K562 (cell line): ENCODE measurements at regions of chr1 and their contacts with region 1.

Region 1: DNA sequence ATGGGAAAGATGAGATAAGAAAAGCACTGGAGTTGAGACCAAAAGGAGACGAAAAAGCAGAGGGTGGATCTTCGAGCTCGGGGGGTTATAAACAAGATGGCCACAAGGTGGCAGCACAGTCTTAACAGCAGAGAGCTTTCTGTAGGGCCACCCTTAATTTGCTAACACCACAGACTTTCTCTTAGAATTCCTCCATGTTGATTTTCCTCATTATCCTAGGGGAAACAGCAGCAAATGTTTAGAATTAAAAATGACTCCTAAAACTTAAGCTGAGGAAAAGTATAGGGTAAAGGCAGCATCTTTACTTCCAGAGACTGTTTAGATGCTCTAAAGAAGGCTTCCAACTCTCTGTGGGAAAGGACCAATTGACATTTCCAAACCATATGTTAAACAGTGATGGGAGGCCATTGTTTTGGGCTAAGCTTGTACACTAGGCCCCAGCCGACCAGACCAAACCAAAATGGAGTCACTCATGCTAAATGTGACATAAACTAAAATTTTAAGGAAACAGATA is 2.5 kb upstream of the APOBEC4 start:
- DNase-seq: peak; percentile 78 to 85 (median 83)
- ATAC-seq: peak; percentile 99
- H3K4me3 ChIP-seq: no peak overlapping the region
- H3K27ac ChIP-seq: no peak overlapping the region
- H3K4me1 ChIP-seq: no peaks in the 10 kb centered on the region
- H3K27me3 ChIP-seq: peaks cover 0 to 14% of the 10 kb centered on the region in 2 experiments; a peak in 1 of 5 replicates
- CTCF ChIP-seq: peak; percentile 82 to 95 (median 88)
- EP300 ChIP-seq: no peak
- POLR2A ChIP-seq: no peak
- RAD21 ChIP-seq: peak; percentile 84 to 91

Region 2: GRCh38 chr1:183567584-183567983 is 88.0 kb before region 1 on chr1:
- CTCF ChIA-PET with region 1: no interaction called
- POLR2A ChIA-PET with region 1: no interaction called
- in situ Hi-C with region 1: no loop called
- intact Hi-C with region 1: no loop called
- DNase-seq: peak; percentile 34 to 81 (median 58)
- ATAC-seq: peak; percentile 81
- H3K4me3 ChIP-seq: no peak overlapping the region
- H3K27ac ChIP-seq: no peak overlapping the region
- H3K4me1 ChIP-seq: peaks cover 10 to 13% of the 10 kb centered on the region in 2 experiments
- H3K27me3 ChIP-seq: peaks cover 19 to 32% of the 10 kb centered on the region in 2 experiments
- CTCF ChIP-seq: no peak
- EP300 ChIP-seq: peak; percentile 77
- POLR2A ChIP-seq: no peak
- RAD21 ChIP-seq: no peak

Region 3: GRCh38 chr1:183685112-183685713 is 29.6 kb after region 1 on chr1:
- CTCF ChIA-PET with region 1: interaction called, 13 read pairs
- POLR2A ChIA-PET with region 1: no interaction called
- in situ Hi-C with region 1: no loop called
- intact Hi-C with region 1: loop called (anchors 1 kb)
- DNase-seq: peak; percentile 65 to 81 (median 80)
- ATAC-seq: peak; percentile 89
- H3K4me3 ChIP-seq: no peak overlapping the region
- H3K27ac ChIP-seq: no peak overlapping the region
- H3K4me1 ChIP-seq: no peaks in the 10 kb centered on the region
- H3K27me3 ChIP-seq: peaks cover 0 to 7% of the 10 kb centered on the region in 2 experiments; a peak in 1 of 5 replicates
- CTCF ChIP-seq: peak; percentile 65 to 88 (median 71); a peak in 5 of 6 replicates
- EP300 ChIP-seq: no peak
- POLR2A ChIP-seq: no peak
- RAD21 ChIP-seq: peak; percentile 87 to 88

Region 4: GRCh38 chr1:183901748-183902330 is 246.2 kb after region 1 on chr1:
- CTCF ChIA-PET with region 1: interaction called, 3 read pairs
- POLR2A ChIA-PET with region 1: no interaction called
- in situ Hi-C with region 1: loop called (anchors 10 kb)
- intact Hi-C with region 1: no loop called
- DNase-seq: no peak
- ATAC-seq: no peak
- H3K4me3 ChIP-seq: no peak overlapping the region
- H3K27ac ChIP-seq: no peak overlapping the region
- H3K4me1 ChIP-seq: no peaks in the 10 kb centered on the region
- H3K27me3 ChIP-seq: peaks cover 7 to 17% of the 10 kb centered on the region in 2 experiments
- CTCF ChIP-seq: no peak
- EP300 ChIP-seq: no peak
- POLR2A ChIP-seq: no peak
- RAD21 ChIP-seq: no peak

Region 5: GRCh38 chr1:183915625-183916510 is 260.2 kb after region 1 on chr1:
- CTCF ChIA-PET with region 1: interaction called, 18 read pairs
- POLR2A ChIA-PET with region 1: interaction called, 3 read pairs
- in situ Hi-C with region 1: no loop called
- intact Hi-C with region 1: loop called (anchors 1 kb)
- DNase-seq: peak; percentile 78 to 90 (median 82)
- ATAC-seq: peak; percentile 93
- H3K4me3 ChIP-seq: no peak overlapping the region
- H3K27ac ChIP-seq: no peak overlapping the region
- H3K4me1 ChIP-seq: peaks cover 0 to 5% of the 10 kb centered on the region in 2 experiments; a peak in 2 of 5 replicates
- H3K27me3 ChIP-seq: peaks cover 0 to 10% of the 10 kb centered on the region in 2 experiments; a peak in 2 of 5 replicates
- CTCF ChIP-seq: peak; percentile 86 to 96 (median 89)
- EP300 ChIP-seq: peak; percentile 45
- POLR2A ChIP-seq: no peak
- RAD21 ChIP-seq: peak; percentile 91 to 95

Region 6: GRCh38 chr1:184036517-184036949 is 380.9 kb after region 1 on chr1:
- CTCF ChIA-PET with region 1: no interaction called
- POLR2A ChIA-PET with region 1: no interaction called
- in situ Hi-C with region 1: no loop called
- intact Hi-C with region 1: loop called (anchors 5 kb)
- DNase-seq: peak; percentile 53 to 69 (median 58)
- ATAC-seq: peak; percentile 65
- H3K4me3 ChIP-seq: peak overlapping the region; percentile 65
- H3K27ac ChIP-seq: peak overlapping the region; percentile 82
- H3K4me1 ChIP-seq: peaks cover 24 to 47% of the 10 kb centered on the region in 2 experiments
- H3K27me3 ChIP-seq: no peaks in the 10 kb centered on the region
- CTCF ChIP-seq: no peak; a peak in 1 of 6 replicates
- EP300 ChIP-seq: no peak
- POLR2A ChIP-seq: peak; percentile 51; the same call in 1 of the 2 replicates
- RAD21 ChIP-seq: no peak

Region 7: DNA sequence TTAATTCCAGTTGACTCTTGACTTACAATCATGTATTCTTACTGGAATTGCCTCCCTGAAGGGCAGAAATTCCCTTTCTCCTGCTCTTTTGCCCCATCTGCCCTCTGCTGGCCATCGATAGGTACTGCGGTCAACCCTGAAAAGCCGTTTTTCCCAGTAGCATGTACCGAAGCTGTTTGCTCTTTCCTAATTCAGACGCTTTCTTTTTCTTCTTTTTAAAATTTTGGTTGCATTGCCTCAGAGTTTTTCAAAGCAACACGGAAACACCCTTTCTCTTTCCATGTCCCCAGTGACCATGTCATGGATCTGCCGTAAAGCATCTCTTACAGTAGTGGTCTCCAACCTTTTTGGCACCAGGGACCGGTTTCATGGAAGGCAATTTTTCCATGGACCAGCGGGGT is 567.0 kb after region 1 on chr1:
- CTCF ChIA-PET with region 1: interaction called, 4 read pairs
- POLR2A ChIA-PET with region 1: no interaction called
- in situ Hi-C with region 1: no loop called
- intact Hi-C with region 1: loop called (anchors 5 kb)
- DNase-seq: peak; percentile 64 to 71 (median 68)
- ATAC-seq: peak; percentile 77
- H3K4me3 ChIP-seq: no peak overlapping the region
- H3K27ac ChIP-seq: no peak overlapping the region
- H3K4me1 ChIP-seq: no peaks in the 10 kb centered on the region
- H3K27me3 ChIP-seq: peaks cover 14 to 26% of the 10 kb centered on the region in 2 experiments
- CTCF ChIP-seq: peak; percentile 86 to 95 (median 92)
- EP300 ChIP-seq: no peak
- POLR2A ChIP-seq: no peak
- RAD21 ChIP-seq: peak; percentile 87 to 90